Lower leg skin (tissue), 4 donors: ENCODE measurements at regions of chr3 and their contacts with region 1.

Region 1: DNA sequence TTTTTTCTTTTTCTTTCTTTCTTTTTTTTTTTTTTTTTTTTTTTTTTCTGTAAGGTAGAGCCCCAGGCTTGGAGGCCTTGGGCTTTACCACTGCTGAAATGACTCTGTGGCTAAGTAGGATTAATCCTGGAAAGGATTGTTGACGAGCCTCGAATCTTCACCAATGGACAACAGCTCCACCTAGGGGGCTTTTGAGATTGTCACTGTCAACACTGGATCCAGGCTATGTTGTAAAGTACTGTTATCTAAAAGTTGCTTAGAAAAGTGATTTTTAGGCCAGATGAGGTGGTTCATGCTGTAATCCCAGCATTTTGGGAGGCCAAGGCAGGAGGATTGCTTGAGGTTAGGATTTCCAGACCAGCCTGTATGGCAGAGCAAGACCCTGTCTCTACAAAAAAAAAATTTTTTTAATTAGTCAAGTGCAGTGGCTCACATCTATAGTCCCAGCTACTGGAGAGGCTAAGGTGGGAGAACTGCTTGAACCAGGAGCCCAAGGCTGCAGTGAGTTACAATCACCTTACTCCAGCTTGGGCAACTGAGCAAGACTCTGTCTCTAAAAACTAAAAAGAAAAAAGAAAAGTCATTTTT is 41.6 kb downstream of the KLHL18 start:
- DNase-seq: peak; percentile 35 to 57
- H3K4me3 ChIP-seq: no peak overlapping the region
- CTCF ChIP-seq: no peak
- POLR2A ChIP-seq: no peak

Region 2: DNA sequence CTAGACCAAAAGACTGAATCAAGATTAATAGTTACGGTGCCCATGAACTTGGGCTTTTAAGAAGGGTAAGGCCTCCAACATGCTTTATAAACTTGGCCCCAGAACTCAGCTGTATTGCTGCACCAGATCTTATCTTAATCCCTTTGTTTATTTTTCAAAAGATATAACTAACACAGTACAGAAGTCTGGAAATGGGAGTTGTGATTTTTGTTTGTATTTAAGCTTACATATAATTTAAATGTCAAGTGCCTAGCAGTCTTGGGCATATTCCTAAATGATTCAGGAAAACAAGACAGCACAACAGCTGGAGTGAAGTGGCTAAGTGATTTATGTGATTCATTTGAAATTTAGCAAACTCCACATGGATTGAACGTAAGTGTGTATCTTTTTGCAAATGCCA is 288.7 kb before region 1 on chr3:
- intact Hi-C with region 1: loop called (anchors 10 kb)
- DNase-seq: no peak
- H3K4me3 ChIP-seq: no peak overlapping the region
- CTCF ChIP-seq: no peak
- POLR2A ChIP-seq: no peak